Caco-2 (cell line): ENCODE measurements at regions of chr11 and their contacts with region 1.

Region 1: DNA sequence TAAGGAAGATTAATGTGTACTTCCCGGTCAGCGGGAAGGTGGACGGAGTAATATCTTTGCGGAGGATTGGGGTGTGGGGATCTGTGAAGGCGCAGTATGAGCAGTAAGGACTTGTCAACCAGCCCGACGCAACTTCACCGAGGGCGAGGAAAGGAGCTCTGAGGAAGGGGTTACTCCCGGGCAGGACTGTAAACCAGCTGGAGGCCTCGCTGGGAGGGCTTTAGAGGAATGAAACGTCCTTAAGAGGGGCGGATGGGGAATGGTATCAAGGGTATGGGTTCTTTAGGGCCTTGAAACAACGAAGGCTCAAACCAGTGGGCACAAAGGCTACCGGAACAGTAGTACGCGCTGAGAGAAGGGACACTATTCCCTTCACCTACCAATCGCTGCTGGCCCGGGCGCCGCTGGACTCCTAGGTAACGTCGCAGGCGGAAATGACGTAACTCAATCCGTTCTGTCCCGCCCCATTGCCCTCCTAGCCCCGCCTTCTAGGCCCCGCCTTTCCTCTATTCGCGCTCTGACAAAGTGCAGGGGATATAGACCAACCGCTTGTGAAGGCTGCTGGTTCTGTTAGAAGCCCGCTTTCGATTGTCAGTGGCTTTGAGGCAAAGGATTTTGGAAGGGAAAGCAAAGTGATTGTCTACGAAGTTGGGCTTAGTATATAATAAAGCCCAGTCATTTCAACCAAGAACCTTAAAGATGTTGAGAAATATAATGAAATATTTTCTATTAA is at the start of gene C11orf65:
- DNase-seq: peak; percentile 99
- H3K4me3 ChIP-seq: peak within 1 kb of the TSS; percentile 68
- H3K4me3 Mint-ChIP-seq: peak within 1 kb of the TSS; percentile 97
- H3K27ac Mint-ChIP-seq: peak within 1 kb of the TSS; percentile 100
- H3K4me1 ChIP-seq: peaks cover 9% of the 10 kb centered on the region
- H3K4me1 Mint-ChIP-seq: peaks cover 17% of the 10 kb centered on the region
- H3K27me3 ChIP-seq: no peaks in the 10 kb centered on the region
- H3K27me3 Mint-ChIP-seq: no peaks in the 10 kb centered on the region
- CTCF ChIP-seq: no peak
- total RNA-seq, gene C11orf65: 0.86 and 1.0 TPM in 2 replicates

Region 2: DNA sequence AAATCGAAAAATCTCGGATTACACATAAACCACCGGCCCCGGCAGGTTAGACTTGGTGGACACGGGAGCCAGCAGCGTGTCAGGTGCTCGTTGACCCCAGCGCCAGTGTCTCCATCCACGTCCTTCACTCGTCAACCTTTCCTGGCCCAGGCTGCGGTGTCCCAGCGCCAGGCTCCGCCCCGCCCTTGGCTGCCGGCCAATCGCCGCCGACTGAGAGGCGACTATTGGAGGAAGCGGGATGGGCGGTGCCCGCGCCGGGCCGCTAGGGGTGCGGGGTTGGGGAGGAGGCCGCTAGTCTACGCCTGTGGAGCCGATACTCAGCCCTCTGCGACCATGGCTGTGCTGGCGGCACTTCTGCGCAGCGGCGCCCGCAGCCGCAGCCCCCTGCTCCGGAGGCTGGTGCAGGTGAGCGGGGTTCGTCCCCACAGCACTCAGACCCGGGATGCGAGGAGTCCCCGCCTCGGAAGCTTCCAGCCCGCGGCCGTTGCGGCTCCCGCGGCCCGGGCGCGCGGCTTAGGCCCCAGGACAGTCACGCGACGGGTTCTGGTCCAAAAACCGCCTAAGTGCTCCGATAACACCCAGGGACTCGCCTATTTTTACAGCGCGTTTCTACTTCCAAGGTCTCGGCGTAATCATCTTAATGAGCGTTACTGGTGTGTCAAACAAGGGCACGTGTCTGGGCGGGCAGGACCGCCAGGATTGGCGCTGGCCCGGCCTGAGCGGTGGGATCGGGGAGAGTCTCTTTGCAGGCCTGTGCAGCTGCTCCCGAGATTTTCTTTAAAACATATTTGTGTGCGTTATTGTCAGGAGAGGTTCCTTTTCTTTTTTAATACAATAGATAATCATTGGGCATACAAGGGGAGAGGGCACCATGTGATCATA is 345.7 kb before region 1 on chr11 and contains the start of gene ACAT1:
- CTCF ChIA-PET with region 1: no interaction called
- POLR2A ChIA-PET with region 1: no interaction called
- intact Hi-C with region 1: loop called (anchors 10 kb)
- DNase-seq: peak; percentile 98 to 100
- H3K4me3 ChIP-seq: peak within 1 kb of the TSS; percentile 88
- H3K4me3 Mint-ChIP-seq: peak within 1 kb of the TSS; percentile 81
- H3K27ac Mint-ChIP-seq: peak within 1 kb of the TSS; percentile 66
- H3K4me1 ChIP-seq: peaks cover 13% of the 10 kb centered on the region
- H3K4me1 Mint-ChIP-seq: peaks cover 27% of the 10 kb centered on the region
- H3K27me3 ChIP-seq: no peaks in the 10 kb centered on the region
- H3K27me3 Mint-ChIP-seq: no peaks in the 10 kb centered on the region
- CTCF ChIP-seq: peak; percentile 54 to 67
- total RNA-seq, gene ACAT1: 131 and 134 TPM in 2 replicates

Region 3: DNA sequence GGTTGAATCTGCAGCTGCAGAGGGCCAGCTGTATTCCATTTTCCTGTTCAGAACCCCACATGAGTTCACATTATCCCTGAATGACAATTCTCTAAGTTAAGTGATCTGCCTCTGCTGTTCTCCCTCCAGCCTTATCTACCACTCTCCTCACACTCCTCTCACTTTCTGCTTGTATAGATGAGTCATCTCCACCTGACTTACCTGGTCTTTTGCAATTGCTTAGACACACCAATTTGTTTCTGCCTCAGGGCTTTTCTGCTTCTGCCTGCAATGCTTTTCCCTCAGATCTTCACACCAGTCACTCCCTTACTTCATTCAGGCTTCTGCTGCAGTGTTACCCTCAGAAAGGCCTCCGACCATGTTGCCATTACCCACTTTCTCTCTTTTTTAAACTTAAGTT is 126.3 kb before region 1 on chr11:
- CTCF ChIA-PET with region 1: no interaction called
- POLR2A ChIA-PET with region 1: no interaction called
- intact Hi-C with region 1: loop called (anchors 2 kb)
- DNase-seq: peak; percentile 87 to 88
- H3K4me3 ChIP-seq: no peak overlapping the region
- H3K4me3 Mint-ChIP-seq: peak overlapping the region; percentile 4
- H3K27ac Mint-ChIP-seq: peak overlapping the region; percentile 1
- H3K4me1 ChIP-seq: peaks cover 19% of the 10 kb centered on the region
- H3K4me1 Mint-ChIP-seq: peaks cover 16% of the 10 kb centered on the region
- H3K27me3 ChIP-seq: no peaks in the 10 kb centered on the region
- H3K27me3 Mint-ChIP-seq: no peaks in the 10 kb centered on the region
- CTCF ChIP-seq: no peak

Region 4: GRCh38 chr11:108486808-108487563 is 19.7 kb after region 1 on chr11:
- CTCF ChIA-PET with region 1: no interaction called
- POLR2A ChIA-PET with region 1: no interaction called
- intact Hi-C with region 1: loop called (anchors 1 kb)
- DNase-seq: peak; percentile 66 to 67
- H3K4me3 ChIP-seq: no peak overlapping the region
- H3K4me3 Mint-ChIP-seq: peak overlapping the region; percentile 53
- H3K27ac Mint-ChIP-seq: peak overlapping the region; percentile 90
- H3K4me1 ChIP-seq: peaks cover 28% of the 10 kb centered on the region
- H3K4me1 Mint-ChIP-seq: peaks cover 31% of the 10 kb centered on the region
- H3K27me3 ChIP-seq: no peaks in the 10 kb centered on the region
- H3K27me3 Mint-ChIP-seq: no peaks in the 10 kb centered on the region
- CTCF ChIP-seq: no peak

Region 5: DNA sequence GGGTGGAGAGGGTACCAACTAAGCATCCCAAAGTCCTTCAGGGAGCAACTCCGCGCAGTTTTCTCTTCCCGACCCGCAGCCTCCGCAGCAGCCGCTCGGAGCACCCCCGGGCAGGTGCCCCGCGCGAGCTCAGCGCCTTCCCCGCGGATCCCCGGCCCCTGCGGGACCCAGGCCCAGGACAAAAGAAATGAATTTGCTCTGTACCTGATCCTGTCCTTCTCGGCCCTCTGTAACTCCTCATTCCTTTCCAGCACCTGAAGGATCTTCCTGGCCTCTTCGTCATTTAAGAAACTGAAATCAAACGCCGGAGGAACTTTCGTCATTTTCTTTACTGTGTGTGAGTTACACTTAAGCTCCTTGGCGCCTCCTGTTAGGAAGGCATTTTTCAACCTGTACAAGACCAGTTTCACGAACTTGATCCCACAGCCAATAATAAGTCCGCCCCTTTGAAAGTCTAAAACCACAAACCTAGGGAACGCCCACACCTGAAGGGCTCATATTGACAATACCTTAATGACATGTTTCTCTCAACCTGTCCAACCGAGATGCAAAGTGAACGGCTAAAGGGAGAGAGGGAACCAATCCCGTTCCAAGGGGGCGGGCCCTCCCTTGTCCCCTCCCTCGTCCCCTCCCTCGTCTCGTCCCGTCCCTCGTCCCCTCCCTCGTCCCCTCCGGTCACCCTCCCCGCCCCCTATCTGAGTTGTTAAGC is 126.1 kb after region 1 on chr11 and contains the start of gene EXPH5:
- CTCF ChIA-PET with region 1: no interaction called
- POLR2A ChIA-PET with region 1: interaction called, 5 read pairs
- intact Hi-C with region 1: loop called (anchors 1 kb)
- DNase-seq: peak; percentile 100
- H3K4me3 ChIP-seq: peak within 1 kb of the TSS; percentile 89
- H3K4me3 Mint-ChIP-seq: peak within 1 kb of the TSS; percentile 100
- H3K27ac Mint-ChIP-seq: peak within 1 kb of the TSS; percentile 100
- H3K4me1 ChIP-seq: peaks cover 18% of the 10 kb centered on the region
- H3K4me1 Mint-ChIP-seq: peaks cover 33% of the 10 kb centered on the region
- H3K27me3 ChIP-seq: no peaks in the 10 kb centered on the region; the same call in 1 of the 2 replicates
- H3K27me3 Mint-ChIP-seq: no peaks in the 10 kb centered on the region
- CTCF ChIP-seq: no peak
- total RNA-seq, gene EXPH5: 15.3 and 18.1 TPM in 2 replicates